ENCODE measurements at regions of chr1 and their contacts with region 1.

Region 1: DNA sequence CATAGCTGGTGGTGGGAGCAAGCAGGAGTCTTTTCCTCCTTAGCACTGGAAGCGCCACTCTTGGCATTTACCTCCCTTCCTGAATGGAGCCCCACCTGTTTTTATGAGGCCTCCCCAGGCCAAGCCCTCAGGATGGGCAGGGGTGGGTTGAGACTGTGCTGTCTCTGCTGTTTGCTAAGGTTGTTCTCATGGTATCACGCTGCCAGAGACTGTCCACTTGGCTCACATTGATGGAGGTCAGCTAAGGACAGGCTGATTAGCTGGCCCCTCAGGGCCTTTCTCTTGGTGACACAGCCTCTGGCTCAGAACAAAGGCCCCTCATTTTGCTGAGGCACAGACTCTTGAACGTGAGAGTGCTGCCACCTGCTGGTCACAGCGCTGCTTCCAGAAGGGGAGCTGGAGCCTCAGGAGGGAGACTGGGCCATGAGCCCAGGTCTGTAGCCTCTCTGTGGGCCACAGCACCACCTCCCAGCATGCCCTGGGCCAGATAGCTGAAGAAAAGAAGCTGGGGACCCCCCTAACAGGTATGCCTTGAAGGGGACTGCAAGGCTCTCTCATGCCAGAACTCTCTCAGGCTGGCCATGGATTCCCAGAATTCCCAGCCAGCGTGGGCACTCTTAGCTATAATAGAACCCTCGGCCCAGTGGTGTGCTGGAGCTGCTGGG is 85.6 kb downstream of the CD58 start:
- DNase-seq: peak; percentile 70 to 97
- H3K4me3 ChIP-seq: no peak overlapping the region
- H3K27ac ChIP-seq: no peak overlapping the region
- H3K4me1 ChIP-seq: no peaks in the 10 kb centered on the region; a peak in 1 of 7 replicates
- H3K27me3 ChIP-seq: no peaks in the 10 kb centered on the region; a peak in 1 of 7 replicates
- CTCF ChIP-seq: peak; percentile 86 to 94 (median 91)
- EP300 ChIP-seq: no peak
- POLR2A ChIP-seq: no peak
- RAD21 ChIP-seq: peak; percentile 96 to 97

Region 2: GRCh38 chr1:116147972-116148371 is 337.2 kb before region 1 on chr1:
- CTCF ChIA-PET with region 1: interaction called, 15 read pairs
- POLR2A ChIA-PET with region 1: interaction called, 3 read pairs
- DNase-seq: no peak
- H3K4me3 ChIP-seq: no peak overlapping the region
- H3K27ac ChIP-seq: no peak overlapping the region
- H3K4me1 ChIP-seq: 0 out of 7 replicates have a peak, but pooled peaks cover 0 to 2% (median 0%) of the 10 kb centered on the region in 4 experiments
- H3K27me3 ChIP-seq: peaks cover 0 to 6% (median 5%) of the 10 kb centered on the region in 4 experiments; a peak in 4 of 7 replicates
- CTCF ChIP-seq: no peak
- EP300 ChIP-seq: no peak
- POLR2A ChIP-seq: no peak
- RAD21 ChIP-seq: 0 out of 4 replicates have a peak, but pooled peaks have one; percentile 4 to 6

Region 3: GRCh38 chr1:116380499-116381242 is 104.5 kb before region 1 on chr1:
- CTCF ChIA-PET with region 1: interaction called, 10 read pairs
- POLR2A ChIA-PET with region 1: interaction called, 5 read pairs
- DNase-seq: no peak
- H3K4me3 ChIP-seq: no peak overlapping the region
- H3K27ac ChIP-seq: no peak overlapping the region
- H3K4me1 ChIP-seq: peaks cover 6 to 25% (median 12%) of the 10 kb centered on the region in 4 experiments; a peak in 6 of 7 replicates
- H3K27me3 ChIP-seq: no peaks in the 10 kb centered on the region
- CTCF ChIP-seq: no peak
- EP300 ChIP-seq: no peak
- POLR2A ChIP-seq: no peak
- RAD21 ChIP-seq: no peak

Region 4: DNA sequence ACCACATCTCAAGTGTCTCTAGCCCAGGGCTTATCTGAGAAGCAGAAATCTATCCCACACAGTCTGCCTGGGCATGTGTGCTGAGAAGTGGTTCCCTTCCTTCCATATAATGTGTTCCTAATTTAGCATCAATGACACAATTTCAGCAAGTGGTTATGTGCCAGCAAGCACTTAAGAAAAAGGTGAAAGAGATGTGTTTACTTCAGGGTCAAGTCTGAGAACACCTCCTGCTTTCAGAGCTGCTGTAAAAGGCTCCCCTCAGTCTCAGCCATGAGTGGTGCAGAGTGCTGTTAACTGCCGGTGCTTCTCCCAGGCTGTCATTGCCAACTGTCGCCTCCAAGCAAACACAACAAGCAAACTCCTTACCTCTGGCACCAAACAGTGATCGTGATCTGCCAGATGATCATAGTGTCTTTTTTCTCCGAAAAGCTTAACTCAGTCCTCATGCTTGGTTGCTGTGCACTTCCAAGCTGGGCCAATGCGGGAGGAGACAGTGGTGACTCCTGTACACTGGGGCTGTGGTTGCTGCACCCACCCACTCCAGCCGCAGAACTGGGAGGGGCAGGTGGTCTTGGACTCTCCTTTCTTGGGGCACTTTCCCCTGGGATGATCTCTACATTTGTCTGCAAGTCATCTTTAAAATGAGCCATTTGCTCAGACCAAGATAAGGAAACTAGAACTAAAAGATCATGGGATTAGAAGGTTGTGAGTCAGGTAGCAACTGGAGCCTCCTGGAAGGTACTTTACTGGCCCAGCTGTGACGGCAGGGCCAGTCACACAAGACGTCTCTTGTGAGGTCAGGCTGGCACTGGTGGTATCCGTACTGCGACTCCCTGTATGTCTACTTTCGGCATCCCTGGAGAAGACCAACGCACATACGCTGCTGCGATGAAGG is 79.7 kb before region 1 on chr1:
- CTCF ChIA-PET with region 1: interaction called, 31 read pairs
- POLR2A ChIA-PET with region 1: interaction called, 4 read pairs
- DNase-seq: no peak
- H3K4me3 ChIP-seq: no peak overlapping the region
- H3K27ac ChIP-seq: no peak overlapping the region
- H3K4me1 ChIP-seq: no peaks in the 10 kb centered on the region
- H3K27me3 ChIP-seq: peaks cover 0 to 1% (median 0%) of the 10 kb centered on the region in 4 experiments; a peak in 1 of 7 replicates
- CTCF ChIP-seq: no peak
- EP300 ChIP-seq: no peak
- POLR2A ChIP-seq: no peak
- RAD21 ChIP-seq: no peak

Region 5: DNA sequence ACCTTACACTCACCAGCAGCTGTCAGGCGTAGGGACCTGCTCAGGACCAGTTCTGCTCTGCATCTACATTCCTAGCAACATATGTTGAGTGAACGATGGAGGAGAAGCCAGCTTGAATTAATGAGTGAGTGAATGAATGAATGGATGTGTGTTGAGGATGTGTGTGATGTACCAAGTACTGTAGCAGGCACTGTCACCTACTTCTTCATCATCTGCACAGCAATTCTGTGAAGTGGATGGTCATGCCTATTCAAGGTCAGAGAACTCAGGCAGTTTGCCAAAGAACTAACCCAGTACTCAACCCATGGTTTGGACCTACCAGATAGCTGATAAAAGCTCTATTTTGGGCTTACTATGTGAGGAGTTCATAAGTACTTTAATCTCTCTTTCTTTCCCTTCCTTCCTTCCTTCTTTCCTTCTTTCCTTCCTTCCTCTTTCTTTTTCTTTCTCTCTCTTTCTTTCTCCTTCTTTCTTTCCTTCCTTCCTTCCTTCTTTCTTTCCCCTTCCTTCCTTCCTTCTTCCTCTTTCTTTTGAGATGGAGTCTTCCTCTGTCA is 55.3 kb before region 1 on chr1:
- CTCF ChIA-PET with region 1: interaction called, 16 read pairs
- POLR2A ChIA-PET with region 1: no interaction called
- DNase-seq: no peak
- H3K4me3 ChIP-seq: no peak overlapping the region
- H3K27ac ChIP-seq: no peak overlapping the region
- H3K4me1 ChIP-seq: peaks cover 0 to 3% (median 0%) of the 10 kb centered on the region in 4 experiments; a peak in 1 of 7 replicates
- H3K27me3 ChIP-seq: no peaks in the 10 kb centered on the region
- CTCF ChIP-seq: no peak
- EP300 ChIP-seq: no peak
- POLR2A ChIP-seq: no peak
- RAD21 ChIP-seq: no peak

Region 6: GRCh38 chr1:116472431-116472961 is 12.7 kb before region 1 on chr1:
- CTCF ChIA-PET with region 1: interaction called, 33 read pairs
- POLR2A ChIA-PET with region 1: no interaction called
- DNase-seq: no peak
- H3K4me3 ChIP-seq: no peak overlapping the region
- H3K27ac ChIP-seq: no peak overlapping the region
- H3K4me1 ChIP-seq: 0 out of 7 replicates have a peak, but pooled peaks cover 0 to 2% (median 0%) of the 10 kb centered on the region in 4 experiments
- H3K27me3 ChIP-seq: no peaks in the 10 kb centered on the region
- CTCF ChIP-seq: no peak
- EP300 ChIP-seq: no peak
- POLR2A ChIP-seq: no peak
- RAD21 ChIP-seq: no peak